OCI-LY7 (cell line): ENCODE measurements at regions of chr18 and their contacts with region 1.

Region 1: GRCh38 chr18:22999212-22999611 is 66.1 kb downstream of the RBBP8 start:
- DNase-seq: no peak
- H3K4me3 ChIP-seq: no peak overlapping the region
- H3K27ac ChIP-seq: no peak overlapping the region
- H3K4me1 ChIP-seq: no peaks in the 10 kb centered on the region
- CTCF ChIP-seq: no peak

Region 2: GRCh38 chr18:22412176-22412908 is 586.9 kb before region 1 on chr18:
- CTCF ChIA-PET with region 1: no interaction called
- POLR2A ChIA-PET with region 1: no interaction called
- intact Hi-C with region 1: no loop called
- DNase-seq: no peak
- H3K4me3 ChIP-seq: no peak overlapping the region
- H3K27ac ChIP-seq: no peak overlapping the region
- H3K4me1 ChIP-seq: no peaks in the 10 kb centered on the region
- CTCF ChIP-seq: no peak

Region 3: DNA sequence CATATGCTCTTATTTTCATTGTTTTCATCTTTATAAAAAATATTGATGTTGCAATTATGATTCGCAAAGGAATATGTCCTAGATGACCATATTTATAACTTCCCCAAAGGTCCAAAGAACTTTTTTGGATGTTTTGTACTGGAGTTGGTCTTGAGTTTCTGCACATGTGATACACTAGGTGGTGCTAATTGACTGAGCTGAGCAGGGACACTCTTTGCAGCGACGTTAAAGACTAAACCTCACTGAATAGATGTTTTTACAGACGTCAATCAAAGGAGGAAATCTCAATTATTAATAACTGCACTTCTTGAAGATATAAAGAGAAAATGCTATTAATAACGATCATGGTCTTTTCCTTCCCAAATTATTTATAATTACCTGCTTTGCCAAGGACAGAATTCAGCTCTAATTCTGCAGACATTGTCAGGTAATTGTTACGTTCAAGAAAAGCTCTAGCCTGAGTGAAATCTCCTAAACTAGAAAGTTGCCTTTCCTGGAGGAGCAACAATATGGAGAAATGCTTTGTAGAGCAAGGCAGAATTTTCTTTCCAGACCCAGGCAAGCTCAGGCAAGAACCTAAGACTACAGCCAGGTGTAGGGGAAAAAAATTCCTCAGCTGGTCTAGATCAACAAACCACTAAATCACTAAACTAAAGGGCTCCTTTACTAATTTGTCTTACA is 185.4 kb before region 1 on chr18:
- CTCF ChIA-PET with region 1: no interaction called
- POLR2A ChIA-PET with region 1: no interaction called
- intact Hi-C with region 1: loop called (anchors 5 kb)
- DNase-seq: peak; percentile 33
- H3K4me3 ChIP-seq: no peak overlapping the region
- H3K27ac ChIP-seq: no peak overlapping the region
- H3K4me1 ChIP-seq: no peaks in the 10 kb centered on the region
- CTCF ChIP-seq: peak; percentile 77

Region 4: GRCh38 chr18:22952525-22952924 is 46.7 kb before region 1 on chr18:
- CTCF ChIA-PET with region 1: no interaction called
- POLR2A ChIA-PET with region 1: interaction called, 10 read pairs
- intact Hi-C with region 1: no loop called
- DNase-seq: no peak
- H3K4me3 ChIP-seq: no peak overlapping the region
- H3K27ac ChIP-seq: no peak overlapping the region
- H3K4me1 ChIP-seq: peaks cover 9% of the 10 kb centered on the region
- CTCF ChIP-seq: no peak